Right ventricle myocardium superior (tissue), 1 donor: ENCODE measurements at regions of chr22 and their contacts with region 1.

Region 1: DNA sequence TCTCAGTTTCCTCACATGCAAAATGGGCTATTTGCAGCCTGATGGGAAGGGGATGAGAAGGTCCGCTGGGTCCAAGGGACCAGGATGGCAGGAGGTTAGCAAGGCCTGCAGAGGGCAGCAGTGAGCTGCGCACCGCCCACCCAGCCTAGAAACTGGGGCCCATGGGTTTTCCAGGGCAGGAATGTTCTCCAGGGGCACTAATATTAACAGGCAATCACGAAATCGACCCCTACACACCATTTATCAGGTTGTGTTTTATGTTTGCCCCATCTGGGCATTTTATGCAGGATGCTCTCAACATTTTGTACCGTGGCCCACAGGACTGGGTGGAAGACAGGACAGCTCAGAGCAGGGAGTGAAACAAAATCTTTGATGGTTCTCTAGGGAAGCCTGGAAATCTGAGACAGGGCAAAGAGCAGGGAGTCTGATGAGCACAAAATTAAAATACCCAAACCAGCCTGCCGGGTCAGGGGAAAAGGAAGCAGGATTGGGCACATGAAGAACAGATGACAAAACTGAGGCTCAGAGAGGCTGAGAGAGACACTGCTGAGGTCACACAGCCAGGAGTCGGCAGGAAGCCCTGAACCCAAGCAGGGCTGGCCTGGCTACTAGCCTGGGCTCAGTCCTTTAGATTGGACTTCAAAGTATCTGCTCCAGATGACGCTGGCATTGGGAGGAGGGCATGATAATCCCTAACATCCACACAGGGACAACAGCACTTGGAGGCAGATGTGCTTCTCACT is 1.6 kb upstream of the BCR start:
- DNase-seq: peak; percentile 78
- ATAC-seq: peak; percentile 72

Region 2: GRCh38 chr22:23036684-23037428 is 141.8 kb before region 1 on chr22:
- intact Hi-C with region 1: no loop called
- DNase-seq: no peak
- ATAC-seq: no peak

Region 3: DNA sequence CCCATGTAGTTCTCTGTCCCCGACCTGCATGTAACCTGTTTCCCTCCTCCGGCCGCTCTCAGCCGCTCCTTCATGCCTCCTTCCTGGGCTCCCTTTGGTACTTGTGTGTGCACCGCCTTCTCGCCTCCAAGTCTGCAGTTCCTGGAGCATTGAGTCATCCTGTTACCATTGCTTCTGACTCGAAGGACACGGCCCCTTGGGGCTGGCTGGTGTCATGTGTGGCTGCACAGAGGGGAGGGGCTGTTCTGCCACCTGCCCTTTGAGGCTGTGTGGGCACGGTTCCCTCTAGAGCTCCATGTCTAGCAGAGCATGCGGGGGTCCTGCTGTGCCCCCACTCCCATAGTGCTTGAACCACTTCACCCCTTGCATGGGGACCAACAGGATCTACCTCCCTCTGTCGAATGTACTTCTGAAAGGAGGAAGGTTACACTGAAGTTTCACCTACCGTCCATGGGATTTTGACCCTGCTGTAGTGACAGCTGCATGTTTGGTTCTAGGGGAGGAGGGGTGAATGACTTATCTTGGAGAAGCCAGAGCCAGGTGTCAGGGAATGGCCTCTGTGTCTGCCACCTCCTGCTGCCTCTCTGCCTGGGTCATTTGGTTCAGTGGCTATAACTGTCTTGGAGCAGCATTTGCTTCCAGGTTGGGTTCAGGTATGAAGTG is 41.3 kb after region 1 on chr22:
- intact Hi-C with region 1: loop called (anchors 5 kb)
- DNase-seq: no peak
- ATAC-seq: no peak

Region 4: GRCh38 chr22:23281406-23282088 is 102.9 kb after region 1 on chr22:
- intact Hi-C with region 1: loop called (anchors 2 kb)
- DNase-seq: peak; percentile 91
- ATAC-seq: peak; percentile 84

Region 5: GRCh38 chr22:23385291-23386244 is 206.9 kb after region 1 on chr22:
- intact Hi-C with region 1: loop called (anchors 10 kb)
- DNase-seq: peak; percentile 89
- ATAC-seq: peak; percentile 90